ENCODE measurements at regions of chr20 and their contacts with region 1.

Region 1: GRCh38 chr20:22106308-22106938 is 401.0 kb downstream of the PAX1 start:
- DNase-seq: no peak
- H3K4me3 ChIP-seq: no peak overlapping the region
- H3K27ac ChIP-seq: no peak overlapping the region
- H3K4me1 ChIP-seq: no peaks in the 10 kb centered on the region
- H3K27me3 ChIP-seq: no peaks in the 10 kb centered on the region
- CTCF ChIP-seq: peak; percentile 63

Region 2: DNA sequence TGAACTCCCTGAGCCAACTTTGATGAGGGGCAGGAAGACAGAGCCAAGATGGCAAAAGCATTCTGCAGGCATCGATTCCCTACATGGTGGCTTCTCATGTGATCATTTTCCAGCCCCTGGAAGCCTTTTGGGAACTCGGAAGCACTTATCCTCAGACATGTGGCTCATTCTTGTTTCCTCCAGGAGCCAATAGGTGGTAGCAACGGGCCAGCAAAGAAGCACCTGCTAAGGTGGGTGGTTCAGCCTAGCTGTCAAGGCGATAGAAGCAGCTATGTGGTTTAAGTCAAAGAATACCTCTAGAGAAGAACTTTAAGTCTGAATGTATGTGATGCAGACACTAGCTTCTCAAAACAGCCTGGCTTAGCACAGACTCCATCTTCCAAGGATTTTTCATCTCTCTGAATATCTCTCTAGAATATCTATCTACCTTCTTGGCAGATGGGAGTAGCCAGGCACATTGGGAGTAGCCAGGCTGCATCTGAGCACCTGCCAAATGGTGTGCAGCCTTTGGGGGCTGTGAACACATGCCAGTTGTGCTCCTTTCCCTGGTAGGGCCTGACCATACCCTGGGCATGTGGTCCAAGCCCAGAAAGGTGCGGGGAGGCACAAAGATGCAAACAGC is 465.8 kb before region 1 on chr20:
- CTCF ChIA-PET with region 1: no interaction called
- POLR2A ChIA-PET with region 1: no interaction called
- intact Hi-C with region 1: loop called (anchors 10 kb)
- DNase-seq: peak in 1 of 2 experiments; percentile 8
- H3K4me3 ChIP-seq: no peak overlapping the region
- H3K27ac ChIP-seq: no peak overlapping the region
- H3K4me1 ChIP-seq: no peaks in the 10 kb centered on the region
- H3K27me3 ChIP-seq: peaks cover 10% of the 10 kb centered on the region
- CTCF ChIP-seq: peak; percentile 45; the same call in 1 of the 2 replicates

Region 3: GRCh38 chr20:22333885-22334545 is 227.6 kb after region 1 on chr20:
- CTCF ChIA-PET with region 1: no interaction called
- POLR2A ChIA-PET with region 1: no interaction called
- intact Hi-C with region 1: no loop called
- DNase-seq: peak in 1 of 2 experiments; percentile 65
- H3K4me3 ChIP-seq: no peak overlapping the region
- H3K27ac ChIP-seq: no peak overlapping the region
- H3K4me1 ChIP-seq: no peaks in the 10 kb centered on the region
- H3K27me3 ChIP-seq: peaks cover 47% of the 10 kb centered on the region
- CTCF ChIP-seq: peak; percentile 85

Measured in PC-9 (cell line).